ENCODE measurements at regions of chr6 and their contacts with region 1.

Region 1: DNA sequence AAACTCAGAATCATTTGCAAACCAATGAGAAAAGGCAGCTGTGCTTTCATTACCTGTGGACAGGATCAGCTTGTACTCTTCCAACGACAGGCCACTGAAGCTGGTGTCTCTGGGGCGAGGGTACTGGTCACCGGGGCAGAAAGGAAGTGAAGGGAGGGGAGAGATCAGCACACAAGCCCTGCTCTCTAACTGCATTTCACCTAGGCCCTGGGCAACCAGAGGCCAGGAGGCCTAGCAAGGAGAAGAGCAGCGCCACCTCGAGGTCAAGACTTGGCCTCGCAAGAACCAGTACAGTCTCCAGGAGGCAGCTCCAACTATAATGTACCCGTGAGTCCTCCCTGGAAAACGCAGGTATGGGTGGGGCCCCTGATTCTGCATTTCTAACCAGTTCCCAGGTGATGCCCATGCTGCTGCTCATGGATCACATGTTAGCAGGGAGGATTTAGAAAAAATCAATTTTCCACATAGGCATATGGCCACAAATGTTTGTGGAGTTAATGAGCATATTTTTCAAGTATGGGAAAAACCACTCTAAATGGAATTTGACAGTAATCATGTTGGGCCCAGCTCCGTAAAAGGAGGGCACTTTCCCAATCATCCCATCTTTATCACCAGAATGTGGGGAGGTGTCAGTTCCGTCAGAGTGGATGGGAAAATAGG is 11.0 kb downstream of the UQCC2 start:
- DNase-seq: peak; percentile 70
- CTCF ChIP-seq: peak; percentile 91

Region 2: GRCh38 chr6:33417903-33418689 is 282.4 kb before region 1 on chr6 and contains the start of gene CUTA:
- in situ Hi-C with region 1: no loop called
- DNase-seq: peak; percentile 95
- CTCF ChIP-seq: peak; percentile 40

Region 3: GRCh38 chr6:33579828-33580714 is 120.5 kb before region 1 on chr6 and contains the start of gene BAK1:
- in situ Hi-C with region 1: loop called (anchors 10 kb)
- DNase-seq: peak; percentile 94
- CTCF ChIP-seq: peak; percentile 61

Measured in GM13977 (cell line).